Activated T-helper 1 cell treated with anti-CD3 and anti-CD28 coated beads, Interleukin-12 subunit alpha, Interleukin-12 subunit beta, Interleukin-2, Interleukin-4 antibody, amounts not matched to agents 30 ng/mL and 10 ng/mL and 1 ng/mL, durations not matched to agents 14 hours and 24 hours and 36 hours (primary cell): ENCODE measurements at regions of chr17 and their contacts with region 1.

Region 1: DNA sequence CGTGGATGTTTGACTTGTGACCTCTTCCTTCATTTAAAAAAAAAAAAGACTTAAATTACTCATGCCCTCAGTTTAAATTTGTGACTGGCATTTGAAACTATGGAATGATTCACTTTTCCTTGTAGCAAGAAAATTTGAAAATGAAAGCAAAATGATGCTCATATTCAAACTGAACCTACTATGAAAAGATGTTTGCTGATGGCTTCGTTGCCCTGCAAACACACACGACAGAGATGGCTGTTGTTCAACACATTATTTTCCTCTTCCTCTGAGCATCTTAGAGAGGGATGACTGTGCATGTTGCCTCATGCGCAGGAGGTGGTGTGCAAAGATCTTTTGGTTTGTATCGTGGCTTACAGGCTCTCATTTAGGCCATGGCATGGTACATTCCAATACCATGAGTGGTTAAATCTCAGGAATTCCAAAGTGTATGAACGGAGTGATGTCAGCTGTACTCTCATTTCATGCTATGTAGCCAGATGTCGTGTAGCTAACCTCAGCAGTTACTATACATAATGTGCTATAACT is 164.5 kb downstream of the PRKCA start:
- DNase-seq: peak; percentile 55
- H3K4me3 Mint-ChIP-seq: peak overlapping the region; percentile 63
- H3K27ac Mint-ChIP-seq: peak overlapping the region; percentile 95
- H3K4me1 Mint-ChIP-seq: peaks cover 79% of the 10 kb centered on the region
- H3K27me3 Mint-ChIP-seq: no peaks in the 10 kb centered on the region

Region 2: DNA sequence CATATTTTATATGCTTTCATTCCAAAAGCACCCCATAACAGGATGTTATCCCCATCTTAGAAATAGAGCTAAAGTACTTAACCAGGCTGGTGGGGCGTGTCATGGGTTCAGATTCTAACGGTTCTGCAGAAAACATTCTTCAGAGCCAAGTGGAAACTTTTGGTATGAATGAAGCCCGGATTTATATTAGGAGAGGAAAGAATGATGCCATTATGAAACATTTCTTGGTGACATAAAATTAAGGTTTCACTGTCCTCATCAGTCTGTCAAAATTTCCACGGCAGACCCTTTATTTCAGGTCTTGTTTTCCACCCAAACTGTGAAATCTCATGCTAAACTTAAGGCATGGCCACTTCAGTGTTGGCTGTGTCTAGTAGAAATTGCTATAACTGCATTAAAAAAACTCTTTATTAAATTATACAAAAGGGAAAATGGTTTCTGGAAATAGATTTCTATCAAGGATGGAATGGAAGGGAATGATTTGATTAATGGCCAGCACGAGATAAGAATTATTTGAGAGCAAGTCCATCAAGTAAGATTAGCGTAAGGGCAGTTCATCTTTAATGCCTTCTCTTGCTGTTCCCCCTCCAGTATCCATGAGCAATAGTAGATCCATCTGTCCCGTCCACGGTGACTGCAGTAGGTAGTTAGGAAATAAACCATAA is 152.8 kb before region 1 on chr17:
- intact Hi-C with region 1: loop called (anchors 1 kb)
- DNase-seq: no peak
- H3K4me3 Mint-ChIP-seq: no peak overlapping the region
- H3K27ac Mint-ChIP-seq: peak overlapping the region; percentile 80
- H3K4me1 Mint-ChIP-seq: peaks cover 77% of the 10 kb centered on the region
- H3K27me3 Mint-ChIP-seq: no peaks in the 10 kb centered on the region

Region 3: DNA sequence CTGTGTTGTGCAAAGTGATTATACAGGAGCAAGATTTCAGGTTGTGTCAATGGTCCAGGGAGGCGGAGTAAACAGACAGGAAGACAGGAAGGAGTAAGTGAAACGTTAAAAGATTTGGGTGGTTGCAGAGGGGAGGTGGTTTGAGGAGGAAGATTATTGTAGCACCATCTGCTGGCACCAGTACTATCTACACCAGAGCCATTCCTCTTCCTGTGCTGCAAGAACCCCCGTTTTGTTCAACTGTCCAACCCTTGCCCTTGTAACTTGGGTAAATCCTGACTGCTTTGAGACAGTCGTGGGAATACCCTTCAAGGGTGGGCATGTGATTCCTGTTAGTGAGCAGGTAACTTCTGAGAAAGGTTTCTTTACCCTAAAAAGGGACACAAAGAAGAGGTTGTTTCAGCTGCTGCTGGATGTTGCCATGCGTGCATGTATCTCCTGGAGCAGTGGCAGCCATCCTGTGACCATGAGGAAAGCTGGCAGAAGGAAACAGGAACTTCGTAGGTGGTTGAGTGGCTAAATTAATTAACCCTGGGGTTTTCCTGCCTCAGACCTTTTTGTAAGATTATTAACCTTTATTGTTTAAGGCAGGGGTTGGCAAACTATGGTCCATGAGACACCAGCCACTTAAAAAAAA is 40.4 kb before region 1 on chr17:
- intact Hi-C with region 1: loop called (anchors 2 kb)
- DNase-seq: peak; percentile 48
- H3K4me3 Mint-ChIP-seq: peak overlapping the region; percentile 23
- H3K27ac Mint-ChIP-seq: peak overlapping the region; percentile 66
- H3K4me1 Mint-ChIP-seq: peaks cover 65% of the 10 kb centered on the region
- H3K27me3 Mint-ChIP-seq: no peaks in the 10 kb centered on the region

Region 4: GRCh38 chr17:66549731-66550207 is 82.9 kb after region 1 on chr17:
- intact Hi-C with region 1: loop called (anchors 1 kb)
- DNase-seq: no peak
- H3K4me3 Mint-ChIP-seq: no peak overlapping the region
- H3K27ac Mint-ChIP-seq: no peak overlapping the region
- H3K4me1 Mint-ChIP-seq: peaks cover 42% of the 10 kb centered on the region
- H3K27me3 Mint-ChIP-seq: no peaks in the 10 kb centered on the region

Region 5: GRCh38 chr17:66655861-66656260 is 189.0 kb after region 1 on chr17:
- intact Hi-C with region 1: loop called (anchors 1 kb)
- DNase-seq: no peak
- H3K4me3 Mint-ChIP-seq: peak overlapping the region; percentile 46
- H3K27ac Mint-ChIP-seq: peak overlapping the region; percentile 81
- H3K4me1 Mint-ChIP-seq: peaks cover 55% of the 10 kb centered on the region
- H3K27me3 Mint-ChIP-seq: no peaks in the 10 kb centered on the region

Region 6: DNA sequence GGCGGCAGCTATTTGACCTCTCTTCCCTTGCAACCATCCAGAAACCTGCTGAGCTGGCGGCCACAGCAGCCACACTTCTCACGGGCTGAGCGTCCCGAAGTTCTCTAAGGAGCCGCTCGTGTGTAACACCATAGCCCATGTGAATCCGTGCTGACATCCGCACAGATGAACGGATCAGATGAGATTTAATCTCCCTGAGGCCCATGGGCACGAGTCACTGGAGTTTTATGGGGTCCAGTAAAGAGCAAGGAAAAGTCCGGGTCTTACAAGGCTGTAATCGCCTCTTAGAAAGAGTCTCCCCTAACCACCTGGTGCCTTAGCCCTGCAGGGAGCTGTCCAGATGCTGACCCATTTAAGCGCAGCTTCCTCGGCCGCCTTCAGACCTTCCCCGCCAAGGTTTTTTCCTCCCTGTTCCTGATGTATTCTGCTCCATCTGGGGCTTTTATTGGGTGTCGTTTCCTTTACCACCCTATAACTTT is 362.5 kb after region 1 on chr17:
- intact Hi-C with region 1: no loop called
- DNase-seq: peak; percentile 6
- H3K4me3 Mint-ChIP-seq: no peak overlapping the region
- H3K27ac Mint-ChIP-seq: no peak overlapping the region
- H3K4me1 Mint-ChIP-seq: peaks cover 9% of the 10 kb centered on the region
- H3K27me3 Mint-ChIP-seq: peaks cover 41% of the 10 kb centered on the region